ENCODE measurements at regions of chr12 and their contacts with region 1.

Region 1: DNA sequence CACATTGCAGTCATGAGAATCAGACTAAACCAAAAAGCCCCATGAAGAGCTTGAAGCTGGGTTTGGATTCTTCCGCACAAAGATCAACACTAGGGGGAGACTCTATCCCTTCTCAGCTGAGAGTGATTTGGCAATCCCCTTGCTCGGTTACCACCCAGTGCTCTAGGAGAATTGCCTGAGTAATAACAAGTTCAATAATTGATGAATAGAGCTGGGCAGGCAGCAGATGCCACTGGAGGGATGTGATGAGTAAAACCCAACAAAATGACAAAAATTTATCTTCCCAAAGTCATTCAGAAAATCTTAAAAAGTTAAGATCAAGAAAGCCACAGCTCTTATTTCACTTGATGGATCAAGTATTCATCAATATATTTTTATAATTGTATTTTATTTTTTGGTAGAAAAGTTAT is 185.6 kb upstream of the ARID2 start:
- DNase-seq: peak; percentile 87
- ATAC-seq: peak; percentile 97
- H3K4me3 ChIP-seq: no peak overlapping the region
- H3K27ac ChIP-seq: no peak overlapping the region
- H3K4me1 ChIP-seq: no peaks in the 10 kb centered on the region
- H3K27me3 ChIP-seq: no peaks in the 10 kb centered on the region
- CTCF ChIP-seq: peak; percentile 86
- POLR2A ChIP-seq: no peak
- RAD21 ChIP-seq: peak; percentile 90

Region 2: GRCh38 chr12:45170456-45171042 is 373.4 kb before region 1 on chr12:
- CTCF ChIA-PET with region 1: interaction called, 3 read pairs
- POLR2A ChIA-PET with region 1: no interaction called
- dilution Hi-C with region 1: no loop called
- in situ Hi-C with region 1: no loop called
- intact Hi-C with region 1: loop called (anchors 5 kb)
- DNase-seq: peak; percentile 77
- ATAC-seq: peak; percentile 87
- H3K4me3 ChIP-seq: no peak overlapping the region
- H3K27ac ChIP-seq: no peak overlapping the region
- H3K4me1 ChIP-seq: no peaks in the 10 kb centered on the region
- H3K27me3 ChIP-seq: peaks cover 2% of the 10 kb centered on the region; the same call in 1 of the 2 replicates
- CTCF ChIP-seq: peak; percentile 88
- POLR2A ChIP-seq: no peak
- RAD21 ChIP-seq: peak; percentile 92

Region 3: DNA sequence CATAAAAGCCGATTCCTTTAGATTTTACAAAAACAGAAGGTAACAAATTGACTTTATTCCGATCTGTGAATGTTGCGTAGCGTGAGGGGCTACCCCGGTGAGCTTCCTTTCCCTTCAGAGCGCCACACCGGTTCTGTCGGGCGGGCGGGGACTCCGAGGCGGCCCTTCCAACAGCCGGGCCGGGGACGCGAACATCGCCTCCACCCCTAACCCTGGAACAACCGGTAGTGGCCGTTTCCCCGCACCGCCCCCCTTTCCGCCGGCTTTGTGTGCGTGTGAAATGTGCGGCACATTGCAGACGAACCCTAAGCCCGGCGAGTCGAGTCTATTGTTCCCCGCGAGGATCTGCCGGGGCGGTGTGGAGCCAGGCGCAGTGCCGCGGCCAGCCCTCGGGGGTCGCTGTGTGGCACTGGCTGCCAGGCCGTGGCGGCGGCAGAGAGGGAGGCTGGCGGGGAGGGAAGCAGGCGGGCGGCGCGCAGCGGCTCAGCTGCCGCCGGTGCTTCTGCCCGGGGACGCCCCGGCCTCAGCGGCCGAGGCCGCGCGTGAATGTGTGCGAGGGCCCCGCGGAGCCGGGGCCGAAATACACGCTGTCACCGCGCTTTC is 184.8 kb after region 1 on chr12:
- CTCF ChIA-PET with region 1: interaction called, 43 read pairs
- POLR2A ChIA-PET with region 1: interaction called, 3 read pairs
- dilution Hi-C with region 1: no loop called
- in situ Hi-C with region 1: no loop called
- intact Hi-C with region 1: loop called (anchors 1 kb)
- DNase-seq: peak; percentile 96
- ATAC-seq: peak; percentile 76
- H3K4me3 ChIP-seq: peak overlapping the region; percentile 69
- H3K27ac ChIP-seq: peak overlapping the region; percentile 96
- H3K4me1 ChIP-seq: peaks cover 1% of the 10 kb centered on the region; the same call in 1 of the 2 replicates
- H3K27me3 ChIP-seq: no peaks in the 10 kb centered on the region
- CTCF ChIP-seq: peak; percentile 98
- POLR2A ChIP-seq: peak; percentile 95
- RAD21 ChIP-seq: peak; percentile 57

Region 4: DNA sequence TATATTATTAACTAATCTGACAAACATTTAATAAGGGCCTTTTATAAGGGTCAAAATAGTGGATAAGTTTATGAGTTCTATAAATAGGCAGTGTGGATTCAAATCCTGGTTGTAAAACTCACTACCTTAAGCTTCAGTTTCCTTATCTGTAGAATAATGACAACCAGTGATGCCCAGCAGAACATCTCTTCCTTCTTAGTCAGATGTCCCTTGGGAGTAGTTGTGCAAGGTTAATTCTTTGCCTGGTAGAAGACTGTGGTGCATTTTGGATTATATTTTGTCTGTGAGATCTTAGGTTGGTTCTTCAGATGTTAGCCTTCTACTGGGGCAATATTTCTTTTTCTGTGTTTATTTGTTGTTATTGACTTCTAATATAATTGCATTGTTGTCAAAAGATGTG is 245.1 kb after region 1 on chr12:
- CTCF ChIA-PET with region 1: no interaction called
- POLR2A ChIA-PET with region 1: no interaction called
- dilution Hi-C with region 1: no loop called
- in situ Hi-C with region 1: no loop called
- intact Hi-C with region 1: no loop called
- DNase-seq: peak; percentile 11
- ATAC-seq: peak; percentile 21
- H3K4me3 ChIP-seq: no peak overlapping the region
- H3K27ac ChIP-seq: no peak overlapping the region
- H3K4me1 ChIP-seq: no peaks in the 10 kb centered on the region
- H3K27me3 ChIP-seq: no peaks in the 10 kb centered on the region
- CTCF ChIP-seq: no peak
- POLR2A ChIP-seq: no peak
- RAD21 ChIP-seq: no peak

Region 5: DNA sequence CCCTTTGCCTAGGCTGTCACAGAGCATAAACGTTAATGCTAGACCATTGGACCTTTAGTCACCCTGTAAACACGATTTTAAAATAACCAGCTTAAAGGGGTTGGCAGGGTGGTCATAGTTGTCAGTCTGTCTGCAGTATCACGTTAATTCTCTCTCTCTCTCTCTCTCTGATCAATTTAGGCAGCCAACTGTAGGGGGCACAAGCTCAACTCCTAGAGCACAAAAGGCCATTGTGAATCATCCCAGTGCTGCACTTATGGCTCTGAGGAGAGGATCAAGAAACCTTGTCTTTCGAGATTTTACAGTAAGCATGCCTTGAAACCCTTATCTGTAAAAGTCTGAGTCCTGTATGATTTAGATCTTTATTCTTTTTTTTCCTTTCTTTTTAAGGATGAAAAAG is 349.3 kb after region 1 on chr12:
- CTCF ChIA-PET with region 1: no interaction called
- POLR2A ChIA-PET with region 1: no interaction called
- dilution Hi-C with region 1: no loop called
- in situ Hi-C with region 1: no loop called
- intact Hi-C with region 1: loop called (anchors 5 kb)
- DNase-seq: peak; percentile 16
- ATAC-seq: no peak
- H3K4me3 ChIP-seq: no peak overlapping the region
- H3K27ac ChIP-seq: no peak overlapping the region
- H3K4me1 ChIP-seq: no peaks in the 10 kb centered on the region; the same call in 1 of the 2 replicates
- H3K27me3 ChIP-seq: no peaks in the 10 kb centered on the region
- CTCF ChIP-seq: peak; percentile 22; the same call in 1 of the 2 replicates
- POLR2A ChIP-seq: no peak
- RAD21 ChIP-seq: no peak

Region 6: DNA sequence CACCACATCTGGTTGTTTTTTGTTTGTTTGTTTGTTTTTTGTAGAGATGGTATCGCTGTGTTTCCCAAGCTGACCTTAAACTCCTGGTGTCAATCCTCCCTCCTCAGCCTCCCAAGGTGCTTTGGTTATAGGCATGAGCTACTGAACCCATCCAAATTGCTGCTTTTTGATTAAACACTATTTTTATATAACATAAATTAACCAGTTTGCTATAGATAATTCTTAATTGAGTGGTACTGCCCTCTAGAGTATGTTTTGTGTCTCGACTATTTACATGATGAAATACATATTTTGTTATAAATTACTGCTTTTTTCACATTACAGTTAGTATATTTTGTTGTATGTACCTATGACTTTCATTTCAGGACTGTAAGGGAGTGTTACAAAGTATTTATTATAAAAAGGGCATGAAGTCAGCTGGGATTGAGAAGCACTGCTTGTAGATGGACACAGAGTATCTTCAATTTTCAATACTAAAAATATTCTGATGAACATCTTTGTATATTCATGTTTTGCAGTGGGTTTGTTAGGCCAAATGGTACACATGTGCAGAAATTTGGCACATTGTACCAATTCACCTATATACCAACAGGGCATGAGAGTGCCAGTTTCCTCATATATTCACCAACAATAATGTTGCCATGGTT is 461.4 kb after region 1 on chr12:
- CTCF ChIA-PET with region 1: no interaction called
- POLR2A ChIA-PET with region 1: no interaction called
- dilution Hi-C with region 1: no loop called
- in situ Hi-C with region 1: loop called (anchors 25 kb)
- intact Hi-C with region 1: no loop called
- DNase-seq: peak; percentile 34
- ATAC-seq: no peak
- H3K4me3 ChIP-seq: no peak overlapping the region
- H3K27ac ChIP-seq: no peak overlapping the region
- H3K4me1 ChIP-seq: no peaks in the 10 kb centered on the region
- H3K27me3 ChIP-seq: peaks cover 16% of the 10 kb centered on the region
- CTCF ChIP-seq: peak; percentile 54
- POLR2A ChIP-seq: no peak
- RAD21 ChIP-seq: peak; percentile 44